ENCODE measurements at regions of chr3 and their contacts with region 1.

Region 1: GRCh38 chr3:57199895-57200297 is at the start of gene HESX1:
- DNase-seq: no peak
- ATAC-seq: no peak
- H3K4me3 ChIP-seq: no peak within 1 kb of the TSS
- H3K4me3 Mint-ChIP-seq: no peak within 1 kb of the TSS
- H3K27ac ChIP-seq: no peak within 1 kb of the TSS
- H3K27ac Mint-ChIP-seq: no peak within 1 kb of the TSS
- H3K4me1 ChIP-seq: no peaks in the 10 kb centered on the region
- H3K4me1 Mint-ChIP-seq: peaks cover 0 to 4% (median 0%) of the 10 kb centered on the region in 3 donors
- H3K27me3 ChIP-seq: peaks cover 0 to 4% of the 10 kb centered on the region in 2 experiments
- H3K27me3 Mint-ChIP-seq: peaks cover 8 to 11% of the 10 kb centered on the region in 2 donors
- total RNA-seq, gene HESX1: 0.49 TPM in 1 of 5 donors, not detected in the others

Region 2: GRCh38 chr3:56737006-56737405 is 462.9 kb before region 1 on chr3:
- CTCF ChIA-PET with region 1: no interaction called
- POLR2A ChIA-PET with region 1: interaction called in 1 of 2 experiments, 10 read pairs
- DNase-seq: no peak
- ATAC-seq: no peak
- H3K4me3 ChIP-seq: no peak overlapping the region
- H3K4me3 Mint-ChIP-seq: no peak overlapping the region
- H3K27ac ChIP-seq: no peak overlapping the region
- H3K27ac Mint-ChIP-seq: peak overlapping the region; percentile 49 to 64
- H3K4me1 ChIP-seq: peaks cover 14 to 20% of the 10 kb centered on the region in 2 experiments
- H3K4me1 Mint-ChIP-seq: peaks cover 33 to 54% (median 53%) of the 10 kb centered on the region in 3 donors
- H3K27me3 ChIP-seq: no peaks in the 10 kb centered on the region
- H3K27me3 Mint-ChIP-seq: no peaks in the 10 kb centered on the region

Region 3: GRCh38 chr3:57309769-57310360 is 110.0 kb after region 1 on chr3:
- CTCF ChIA-PET with region 1: no interaction called
- POLR2A ChIA-PET with region 1: no interaction called
- DNase-seq: no peak
- ATAC-seq: no peak
- H3K4me3 ChIP-seq: no peak overlapping the region
- H3K4me3 Mint-ChIP-seq: no peak overlapping the region
- H3K27ac ChIP-seq: no peak overlapping the region
- H3K27ac Mint-ChIP-seq: no peak overlapping the region
- H3K4me1 ChIP-seq: no peaks in the 10 kb centered on the region
- H3K4me1 Mint-ChIP-seq: no peaks in the 10 kb centered on the region
- H3K27me3 ChIP-seq: peaks cover 0 to 3% of the 10 kb centered on the region in 2 experiments
- H3K27me3 Mint-ChIP-seq: peaks cover 5 to 7% of the 10 kb centered on the region in 2 donors

Region 4: GRCh38 chr3:57793737-57794187 is 593.9 kb after region 1 on chr3:
- CTCF ChIA-PET with region 1: no interaction called
- POLR2A ChIA-PET with region 1: interaction called in 1 of 2 experiments, 10 read pairs
- DNase-seq: no peak
- ATAC-seq: no peak
- H3K4me3 ChIP-seq: no peak overlapping the region
- H3K4me3 Mint-ChIP-seq: no peak overlapping the region
- H3K27ac ChIP-seq: no peak overlapping the region
- H3K27ac Mint-ChIP-seq: peak overlapping the region; percentile 20 to 70
- H3K4me1 ChIP-seq: peaks cover 0 to 2% of the 10 kb centered on the region in 2 experiments
- H3K4me1 Mint-ChIP-seq: peaks cover 48 to 54% (median 54%) of the 10 kb centered on the region in 3 donors
- H3K27me3 ChIP-seq: no peaks in the 10 kb centered on the region
- H3K27me3 Mint-ChIP-seq: no peaks in the 10 kb centered on the region

Measured in T-cell (primary cell).